Activated CD8-positive, alpha-beta T cell treated with anti-CD3 and anti-CD28 coated beads for 36 hours (primary cell): ENCODE measurements at regions of chr1 and their contacts with region 1.

Region 1: DNA sequence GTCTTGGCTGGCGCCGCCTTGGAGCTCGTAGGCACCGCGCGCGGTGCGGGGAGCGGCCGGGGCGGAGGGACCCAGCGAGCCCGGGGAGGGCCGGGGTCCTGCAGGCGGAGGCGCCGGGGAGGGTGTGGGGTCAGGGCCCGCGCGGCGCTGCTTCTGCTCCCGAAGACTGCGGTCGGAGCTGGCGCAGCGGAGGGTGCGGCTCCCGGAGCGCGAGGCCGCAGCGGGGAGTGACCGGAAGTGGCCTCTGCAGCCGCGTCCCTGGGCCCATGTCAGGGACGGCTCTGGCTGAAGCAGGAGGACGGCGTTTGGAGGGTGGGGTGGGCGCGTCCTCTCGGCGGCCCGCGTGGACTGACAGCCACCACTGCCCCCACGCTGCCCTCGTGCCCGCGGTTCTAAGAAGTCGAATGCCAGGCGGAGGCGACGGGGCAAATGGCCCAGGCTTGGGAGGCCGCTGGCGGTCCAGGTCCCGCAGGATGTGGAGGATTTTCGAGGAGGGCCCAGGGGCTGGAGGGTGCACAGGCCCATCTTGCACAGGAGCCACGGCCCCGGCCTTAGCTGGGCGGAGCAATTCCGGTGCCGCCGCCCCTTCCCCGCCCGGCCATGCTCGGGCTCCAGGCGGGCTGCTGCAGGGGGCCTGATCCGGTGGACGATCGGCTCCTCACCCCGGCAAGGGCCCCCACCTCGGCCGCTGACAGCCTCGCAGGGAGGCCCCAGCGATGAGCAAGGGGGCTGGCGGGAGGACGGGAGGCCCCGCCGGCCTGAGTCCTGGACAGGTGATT is 7.7 kb upstream of the ZNF669 start:
- DNase-seq: no peak
- ATAC-seq: peak; percentile 12
- H3K4me3 Mint-ChIP-seq: no peak overlapping the region
- H3K27ac Mint-ChIP-seq: no peak overlapping the region
- H3K4me1 Mint-ChIP-seq: peaks cover 11% of the 10 kb centered on the region
- H3K27me3 Mint-ChIP-seq: peaks cover 46% of the 10 kb centered on the region
- CTCF ChIP-seq: no peak

Region 2: DNA sequence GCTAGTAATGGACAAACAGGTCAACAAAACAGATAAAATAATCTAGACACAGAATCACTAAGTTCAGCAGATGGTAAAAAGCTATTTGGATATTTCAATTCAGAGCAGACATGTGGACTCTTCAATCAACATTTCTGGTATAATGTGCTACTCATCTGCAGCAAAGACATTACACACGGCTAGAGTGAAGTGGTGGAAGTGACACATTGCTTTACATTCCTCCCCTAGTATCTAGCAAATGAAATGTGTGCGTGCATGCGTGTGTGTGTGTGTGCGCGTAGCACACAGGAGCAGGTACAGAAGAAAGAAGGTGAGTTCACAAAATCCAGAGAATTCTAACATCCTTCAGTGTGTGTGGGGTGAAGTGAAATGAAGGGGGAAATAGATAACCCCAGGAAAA is 188.4 kb before region 1 on chr1:
- CTCF ChIA-PET with region 1: no interaction called
- POLR2A ChIA-PET with region 1: no interaction called
- intact Hi-C with region 1: loop called (anchors 10 kb)
- DNase-seq: no peak
- ATAC-seq: no peak
- H3K4me3 Mint-ChIP-seq: no peak overlapping the region
- H3K27ac Mint-ChIP-seq: no peak overlapping the region
- H3K4me1 Mint-ChIP-seq: peaks cover 52% of the 10 kb centered on the region
- H3K27me3 Mint-ChIP-seq: no peaks in the 10 kb centered on the region
- CTCF ChIP-seq: no peak

Region 3: GRCh38 chr1:247007511-247008405 is 104.1 kb before region 1 on chr1 and contains the start of gene ZNF695:
- CTCF ChIA-PET with region 1: no interaction called
- POLR2A ChIA-PET with region 1: no interaction called
- intact Hi-C with region 1: no loop called
- DNase-seq: peak; percentile 84
- ATAC-seq: peak; percentile 99
- H3K4me3 Mint-ChIP-seq: peak within 1 kb of the TSS; percentile 85
- H3K27ac Mint-ChIP-seq: no peak within 1 kb of the TSS
- H3K4me1 Mint-ChIP-seq: peaks cover 4% of the 10 kb centered on the region
- H3K27me3 Mint-ChIP-seq: peaks cover 36% of the 10 kb centered on the region
- CTCF ChIP-seq: no peak
- total RNA-seq, gene ZNF695: 1.1 to 2.6 TPM